Dorsolateral prefrontal cortex (tissue), 120 donors: ENCODE measurements at regions of chr3 and their contacts with region 1.

Region 1: GRCh38 chr3:157948605-157949383 is 157.4 kb downstream of the SHOX2 start:
- DNase-seq: no peak
- H3K4me3 ChIP-seq: no peak overlapping the region
- H3K27ac ChIP-seq: no peak overlapping the region
- H3K27me3 ChIP-seq: peaks cover 0 to 10% (median 0%) of the 10 kb centered on the region in 45 donors
- CTCF ChIP-seq: no peak

Region 2: DNA sequence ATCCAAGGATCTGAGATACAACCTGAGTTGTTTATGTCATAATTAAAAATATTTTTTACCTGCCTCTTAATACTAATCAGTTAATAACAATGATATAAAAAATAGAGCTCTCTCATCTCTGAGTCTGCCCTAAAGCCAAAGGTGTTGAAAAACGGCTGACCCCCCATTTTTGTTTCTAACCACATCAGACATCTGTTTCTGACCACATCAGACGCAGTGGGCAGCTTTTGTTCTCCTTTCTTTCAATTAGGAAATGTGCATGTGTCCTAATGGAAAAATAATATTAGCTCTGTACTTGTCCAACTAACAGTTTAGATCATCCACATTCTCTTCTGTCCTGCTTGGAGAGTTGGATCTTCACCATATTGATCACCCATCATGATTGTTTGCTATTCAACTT is 12.9 kb after region 1 on chr3:
- intact Hi-C with region 1: loop called in 1 of 2 experiments (anchors 2 kb)
- DNase-seq: no peak
- H3K4me3 ChIP-seq: no peak overlapping the region
- H3K27ac ChIP-seq: no peak overlapping the region
- H3K27me3 ChIP-seq: peaks cover 0 to 4% (median 0%) of the 10 kb centered on the region in 45 donors
- CTCF ChIP-seq: no peak

Region 3: GRCh38 chr3:158050461-158050860 is 101.7 kb after region 1 on chr3:
- intact Hi-C with region 1: no loop called
- DNase-seq: no peak
- H3K4me3 ChIP-seq: no peak overlapping the region
- H3K27ac ChIP-seq: no peak overlapping the region
- H3K27me3 ChIP-seq: no peaks in the 10 kb centered on the region
- CTCF ChIP-seq: no peak